ENCODE measurements at regions of chr11 and their contacts with region 1.

Region 1: GRCh38 chr11:14537134-14537599 is 17.0 kb upstream of the PSMA1 start:
- DNase-seq: peak in 1 of 2 experiments; percentile 47
- H3K4me3 ChIP-seq: no peak overlapping the region
- H3K4me3 Mint-ChIP-seq: no peak overlapping the region
- H3K27ac Mint-ChIP-seq: no peak overlapping the region
- H3K4me1 ChIP-seq: no peaks in the 10 kb centered on the region
- H3K4me1 Mint-ChIP-seq: no peaks in the 10 kb centered on the region
- H3K27me3 ChIP-seq: no peaks in the 10 kb centered on the region
- H3K27me3 Mint-ChIP-seq: no peaks in the 10 kb centered on the region
- CTCF ChIP-seq: peak; percentile 66 to 79

Region 2: GRCh38 chr11:14773755-14774154 is 236.6 kb after region 1 on chr11:
- CTCF ChIA-PET with region 1: no interaction called
- POLR2A ChIA-PET with region 1: no interaction called
- intact Hi-C with region 1: loop called (anchors 1 kb)
- DNase-seq: peak in 1 of 2 experiments; percentile 5
- H3K4me3 ChIP-seq: no peak overlapping the region
- H3K4me3 Mint-ChIP-seq: no peak overlapping the region
- H3K27ac Mint-ChIP-seq: no peak overlapping the region
- H3K4me1 ChIP-seq: no peaks in the 10 kb centered on the region
- H3K4me1 Mint-ChIP-seq: peaks cover 7% of the 10 kb centered on the region
- H3K27me3 ChIP-seq: no peaks in the 10 kb centered on the region
- H3K27me3 Mint-ChIP-seq: no peaks in the 10 kb centered on the region
- CTCF ChIP-seq: peak; percentile 37 to 39

Region 3: GRCh38 chr11:14892036-14892567 is 354.9 kb after region 1 on chr11 and contains the start of gene CYP2R1:
- CTCF ChIA-PET with region 1: no interaction called
- POLR2A ChIA-PET with region 1: no interaction called
- intact Hi-C with region 1: loop called (anchors 5 kb)
- DNase-seq: peak; percentile 99
- H3K4me3 ChIP-seq: peak within 1 kb of the TSS; percentile 78
- H3K4me3 Mint-ChIP-seq: peak within 1 kb of the TSS; percentile 99
- H3K27ac Mint-ChIP-seq: peak within 1 kb of the TSS; percentile 88
- H3K4me1 ChIP-seq: peaks cover 27% of the 10 kb centered on the region
- H3K4me1 Mint-ChIP-seq: peaks cover 26% of the 10 kb centered on the region
- H3K27me3 ChIP-seq: no peaks in the 10 kb centered on the region
- H3K27me3 Mint-ChIP-seq: no peaks in the 10 kb centered on the region
- CTCF ChIP-seq: no peak
- total RNA-seq, gene CYP2R1: 33.0 and 34.5 TPM in 2 replicates

Region 4: DNA sequence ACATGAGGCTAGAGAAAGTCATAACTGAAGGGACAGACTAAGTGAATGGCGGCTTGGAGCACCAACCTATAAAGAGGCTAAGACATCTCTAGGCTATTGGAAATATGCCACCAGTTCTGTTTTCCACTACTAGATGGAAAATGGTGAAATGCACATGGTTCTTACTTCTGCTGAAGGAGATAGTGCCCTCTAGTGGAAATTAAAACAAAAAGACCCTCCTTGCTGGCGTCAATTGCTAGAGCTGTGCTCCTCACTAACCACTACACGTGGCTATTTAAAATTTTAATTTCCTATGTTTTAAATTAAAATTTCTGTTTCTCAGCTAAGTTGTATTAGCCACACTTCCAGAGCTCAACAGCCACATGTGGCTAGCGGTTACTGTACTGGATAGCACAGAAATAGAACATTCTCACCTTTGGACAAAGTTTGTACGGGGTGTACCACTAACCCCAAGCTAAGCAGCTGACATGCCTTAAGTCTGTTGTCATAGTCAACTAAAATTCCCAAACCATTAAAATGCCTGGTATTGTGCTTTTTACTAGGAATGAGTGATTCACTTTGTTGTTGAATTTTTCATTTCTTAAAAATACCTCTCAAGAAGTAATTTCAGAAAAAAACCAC is 469.1 kb after region 1 on chr11:
- CTCF ChIA-PET with region 1: no interaction called
- POLR2A ChIA-PET with region 1: no interaction called
- intact Hi-C with region 1: loop called (anchors 5 kb)
- DNase-seq: peak in 1 of 2 experiments; percentile 30
- H3K4me3 ChIP-seq: no peak overlapping the region
- H3K4me3 Mint-ChIP-seq: no peak overlapping the region
- H3K27ac Mint-ChIP-seq: no peak overlapping the region
- H3K4me1 ChIP-seq: no peaks in the 10 kb centered on the region
- H3K4me1 Mint-ChIP-seq: no peaks in the 10 kb centered on the region
- H3K27me3 ChIP-seq: no peaks in the 10 kb centered on the region; the same call in 1 of the 2 replicates
- H3K27me3 Mint-ChIP-seq: peaks cover 18% of the 10 kb centered on the region
- CTCF ChIP-seq: peak; percentile 58 to 62

Measured in Caco-2 (cell line).